WTC11 (cell line): ENCODE measurements at regions of chr12 and their contacts with region 1.

Region 1: DNA sequence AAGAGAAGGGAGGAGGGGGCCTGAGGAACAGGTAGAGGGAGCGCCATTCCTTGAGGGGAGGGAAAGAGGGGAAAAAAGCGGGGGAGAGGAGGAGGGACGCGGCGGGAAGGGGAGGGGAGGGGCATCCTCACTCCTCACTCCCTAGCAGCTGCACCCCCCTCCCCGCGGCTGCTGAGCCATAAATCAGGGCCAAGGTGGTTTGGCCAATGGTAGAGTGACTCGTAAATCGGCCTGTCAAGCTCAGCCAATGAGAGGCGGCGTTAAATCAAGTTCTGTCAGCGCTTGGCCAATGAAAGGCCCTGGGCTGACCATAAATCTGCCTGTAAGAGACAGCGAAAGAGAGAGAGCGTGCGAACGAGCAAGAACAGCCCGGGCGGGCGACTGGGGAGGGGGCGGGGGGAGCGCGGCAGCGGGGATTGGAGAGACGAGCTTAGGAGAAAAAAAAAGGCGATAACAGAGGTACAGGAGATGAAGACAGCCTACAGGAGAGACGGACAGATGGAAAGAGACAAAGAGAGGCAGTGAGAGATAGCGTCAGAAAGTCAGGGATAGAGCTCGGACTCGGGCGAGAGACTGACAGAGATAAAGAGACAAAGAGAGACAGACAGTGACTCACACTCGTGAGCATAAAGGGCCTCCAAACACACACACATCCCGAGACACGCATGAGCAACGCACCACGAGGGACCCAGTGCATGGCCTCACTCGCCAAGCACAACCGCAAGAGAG is 5.1 kb downstream of the GPR84 start:
- DNase-seq: peak; percentile 96
- ATAC-seq: peak; percentile 77
- H3K4me3 Mint-ChIP-seq: no peak overlapping the region
- H3K27ac Mint-ChIP-seq: no peak overlapping the region
- H3K4me1 Mint-ChIP-seq: peaks cover 7% of the 10 kb centered on the region
- H3K27me3 Mint-ChIP-seq: peaks cover 8% of the 10 kb centered on the region
- CTCF ChIP-seq: no peak

Region 2: DNA sequence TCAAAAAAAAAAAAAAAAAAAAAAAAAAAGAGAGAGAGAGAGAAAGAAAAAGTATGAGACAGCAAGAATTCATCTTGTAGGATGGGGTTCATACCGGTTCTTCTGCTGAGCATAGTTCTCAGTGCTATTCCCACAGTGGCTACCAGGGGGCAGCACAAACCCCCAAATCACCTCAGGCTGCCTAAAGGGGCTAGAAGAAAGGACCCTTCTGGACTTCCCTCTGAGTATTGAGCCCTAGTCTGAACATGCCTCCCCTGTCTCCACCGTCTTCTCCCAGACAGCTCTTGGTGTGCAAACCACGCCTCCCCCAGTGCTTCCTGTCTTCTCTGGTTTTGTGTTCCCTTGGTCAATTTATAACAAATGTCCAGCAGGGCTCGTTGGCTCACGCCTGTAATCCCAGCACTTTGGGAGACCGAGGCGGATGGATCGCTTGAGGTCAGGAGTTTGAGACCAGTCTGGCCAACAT is 139.1 kb before region 1 on chr12:
- CTCF ChIA-PET with region 1: interaction called, 57 read pairs
- POLR2A ChIA-PET with region 1: no interaction called
- DNase-seq: peak; percentile 86
- ATAC-seq: peak; percentile 64
- H3K4me3 Mint-ChIP-seq: no peak overlapping the region
- H3K27ac Mint-ChIP-seq: no peak overlapping the region
- H3K4me1 Mint-ChIP-seq: peaks cover 31% of the 10 kb centered on the region
- H3K27me3 Mint-ChIP-seq: peaks cover 39% of the 10 kb centered on the region
- CTCF ChIP-seq: peak; percentile 73

Region 3: GRCh38 chr12:54279866-54280467 is 79.2 kb before region 1 on chr12 and contains the start of gene CBX5:
- CTCF ChIA-PET with region 1: interaction called, 6 read pairs
- POLR2A ChIA-PET with region 1: interaction called, 40 read pairs
- DNase-seq: peak; percentile 99
- ATAC-seq: peak; percentile 53
- H3K4me3 Mint-ChIP-seq: no peak within 1 kb of the TSS
- H3K27ac Mint-ChIP-seq: no peak within 1 kb of the TSS
- H3K4me1 Mint-ChIP-seq: peaks cover 58% of the 10 kb centered on the region
- H3K27me3 Mint-ChIP-seq: no peaks in the 10 kb centered on the region
- CTCF ChIP-seq: no peak
- total RNA-seq, gene CBX5: 182 to 218 TPM (median 216 TPM) in 3 replicates

Region 4: DNA sequence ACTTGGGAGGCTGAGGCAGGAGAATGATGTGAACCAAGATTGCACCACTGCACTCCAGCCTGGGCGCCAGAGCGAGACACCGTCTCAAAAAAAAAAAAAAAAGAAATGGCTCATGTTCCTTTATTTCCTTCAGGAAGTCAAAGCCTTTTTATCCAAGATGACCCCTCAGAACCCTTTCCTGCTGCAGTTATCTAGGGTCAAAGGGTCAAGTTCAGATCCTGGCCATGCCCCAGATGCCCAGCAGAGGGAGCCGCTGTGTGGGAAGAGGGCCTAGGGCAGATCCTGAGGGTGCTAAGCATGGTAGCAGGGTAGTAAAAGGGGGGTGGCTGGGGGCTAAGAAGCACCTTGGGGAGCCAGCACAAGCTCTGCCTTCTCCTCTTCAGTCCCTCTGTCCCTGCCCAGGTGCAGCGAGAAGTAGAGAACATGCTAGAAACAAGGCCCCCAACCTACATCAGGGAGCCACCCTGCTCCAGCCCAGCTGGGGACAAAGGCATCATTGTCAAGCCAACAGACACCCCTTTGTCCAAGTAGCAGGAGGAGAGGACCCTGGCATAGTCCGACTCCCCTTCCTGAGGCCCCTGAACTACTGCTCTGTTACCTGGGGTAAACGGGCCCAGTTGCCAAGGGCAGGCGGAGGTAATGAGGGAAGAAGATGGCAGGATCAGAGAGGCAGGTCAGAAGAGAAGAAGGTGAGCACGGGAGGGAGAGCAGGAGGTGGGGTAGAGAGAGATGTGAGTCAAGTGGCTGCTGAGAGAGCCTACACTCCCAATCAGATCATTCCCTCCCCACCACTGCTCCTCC is 64.8 kb before region 1 on chr12:
- CTCF ChIA-PET with region 1: interaction called, 119 read pairs
- POLR2A ChIA-PET with region 1: interaction called, 4 read pairs
- DNase-seq: peak; percentile 88
- ATAC-seq: peak; percentile 76
- H3K4me3 Mint-ChIP-seq: no peak overlapping the region
- H3K27ac Mint-ChIP-seq: no peak overlapping the region
- H3K4me1 Mint-ChIP-seq: peaks cover 4% of the 10 kb centered on the region
- H3K27me3 Mint-ChIP-seq: peaks cover 4% of the 10 kb centered on the region
- CTCF ChIP-seq: peak; percentile 77

Region 5: GRCh38 chr12:54300732-54301427 is 58.3 kb before region 1 on chr12 and contains the start of gene NFE2:
- CTCF ChIA-PET with region 1: interaction called, 119 read pairs
- POLR2A ChIA-PET with region 1: interaction called, 4 read pairs
- DNase-seq: peak; percentile 86
- ATAC-seq: peak; percentile 94
- H3K4me3 Mint-ChIP-seq: peak within 1 kb of the TSS; percentile 68
- H3K27ac Mint-ChIP-seq: peak within 1 kb of the TSS; percentile 90
- H3K4me1 Mint-ChIP-seq: peaks cover 53% of the 10 kb centered on the region
- H3K27me3 Mint-ChIP-seq: peaks cover 15% of the 10 kb centered on the region
- CTCF ChIP-seq: no peak
- total RNA-seq, gene NFE2: 2.4 to 3.0 TPM (median 3.0 TPM) in 3 replicates

Region 6: GRCh38 chr12:54306925-54307741 is 52.1 kb before region 1 on chr12:
- CTCF ChIA-PET with region 1: interaction called, 32 read pairs
- POLR2A ChIA-PET with region 1: interaction called, 4 read pairs
- DNase-seq: peak; percentile 45
- ATAC-seq: peak; percentile 84
- H3K4me3 Mint-ChIP-seq: no peak overlapping the region
- H3K27ac Mint-ChIP-seq: no peak overlapping the region
- H3K4me1 Mint-ChIP-seq: peaks cover 31% of the 10 kb centered on the region
- H3K27me3 Mint-ChIP-seq: no peaks in the 10 kb centered on the region
- CTCF ChIP-seq: no peak